Endothelial cell of umbilical vein (primary cell): ENCODE measurements at regions of chr19 and their contacts with region 1.

Region 1: GRCh38 chr19:53103198-53103944 is at the start of gene ZNF160:
- DNase-seq: peak; percentile 98
- H3K4me3 ChIP-seq: peak within 1 kb of the TSS; percentile 79 to 93 (median 90)
- H3K27ac ChIP-seq: peak within 1 kb of the TSS; percentile 94
- H3K4me1 ChIP-seq: peaks cover 11% of the 10 kb centered on the region
- H3K27me3 ChIP-seq: no peaks in the 10 kb centered on the region
- CTCF ChIP-seq: no peak
- POLR2A ChIP-seq: peak; percentile 72
- total RNA-seq, gene ZNF160: 16.4 and 19.7 TPM in 2 replicates

Region 2: DNA sequence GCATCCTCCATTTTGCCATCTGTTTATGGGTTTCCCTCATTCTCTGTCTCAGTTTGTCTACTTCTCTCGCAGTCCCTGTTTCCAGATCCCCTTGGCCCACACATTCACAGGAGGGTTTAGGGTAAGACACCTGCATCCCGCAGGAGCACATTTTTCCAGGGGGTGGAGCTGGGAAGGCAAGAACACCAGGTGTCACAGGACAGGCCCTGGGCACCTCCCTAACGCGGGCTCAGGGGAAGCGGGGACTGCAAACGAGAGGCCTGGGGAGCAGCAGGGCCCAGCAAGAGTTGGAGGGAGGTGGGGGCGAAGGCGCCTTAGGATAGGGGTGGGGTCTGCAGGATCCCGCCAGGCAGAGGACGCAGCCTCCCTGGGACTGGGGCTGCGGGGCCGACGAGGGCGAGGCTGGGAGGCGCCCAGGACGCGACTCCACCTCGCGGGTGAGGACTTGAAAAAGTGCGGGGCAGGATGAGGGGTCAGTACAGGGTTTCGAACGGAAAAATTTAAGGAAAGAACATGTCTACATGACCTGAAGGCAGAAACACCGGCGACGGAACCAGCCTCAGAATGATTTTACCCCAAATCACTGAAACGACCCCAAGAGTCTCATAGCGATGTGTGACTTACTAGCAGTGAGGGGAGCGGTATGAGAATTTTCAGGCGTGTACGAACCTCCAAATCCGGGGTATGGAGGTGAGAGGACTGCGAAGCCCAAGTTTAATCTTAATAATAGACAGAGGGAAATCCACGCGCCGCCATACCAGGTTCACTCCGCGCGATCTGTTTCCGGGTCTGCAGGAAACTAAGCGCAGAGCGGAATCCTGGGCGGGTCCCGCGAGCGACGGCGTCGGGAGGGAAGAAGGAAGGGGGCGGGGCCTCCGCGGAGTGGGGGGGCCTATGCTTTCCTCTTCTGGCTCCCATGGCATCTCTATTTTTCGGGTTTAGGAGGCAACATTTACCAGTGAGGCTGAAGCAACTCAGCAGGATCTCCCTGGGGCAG is 66.0 kb before region 1 on chr19:
- CTCF ChIA-PET with region 1: no interaction called
- POLR2A ChIA-PET with region 1: no interaction called
- dilution Hi-C with region 1: no loop called
- intact Hi-C with region 1: no loop called
- DNase-seq: peak; percentile 42
- H3K4me3 ChIP-seq: peak overlapping the region; percentile 43 to 86 (median 72)
- H3K27ac ChIP-seq: peak overlapping the region; percentile 15
- H3K4me1 ChIP-seq: no peaks in the 10 kb centered on the region
- H3K27me3 ChIP-seq: no peaks in the 10 kb centered on the region
- CTCF ChIP-seq: no peak
- POLR2A ChIP-seq: peak; percentile 50

Region 3: GRCh38 chr19:53076977-53077376 is 26.4 kb before region 1 on chr19:
- CTCF ChIA-PET with region 1: interaction called, 12 read pairs
- POLR2A ChIA-PET with region 1: interaction called, 3 read pairs
- dilution Hi-C with region 1: no loop called
- intact Hi-C with region 1: no loop called
- DNase-seq: peak; percentile 72
- H3K4me3 ChIP-seq: no peak overlapping the region
- H3K27ac ChIP-seq: no peak overlapping the region
- H3K4me1 ChIP-seq: no peaks in the 10 kb centered on the region
- H3K27me3 ChIP-seq: no peaks in the 10 kb centered on the region
- CTCF ChIP-seq: peak; percentile 78 to 79
- POLR2A ChIP-seq: no peak

Region 4: DNA sequence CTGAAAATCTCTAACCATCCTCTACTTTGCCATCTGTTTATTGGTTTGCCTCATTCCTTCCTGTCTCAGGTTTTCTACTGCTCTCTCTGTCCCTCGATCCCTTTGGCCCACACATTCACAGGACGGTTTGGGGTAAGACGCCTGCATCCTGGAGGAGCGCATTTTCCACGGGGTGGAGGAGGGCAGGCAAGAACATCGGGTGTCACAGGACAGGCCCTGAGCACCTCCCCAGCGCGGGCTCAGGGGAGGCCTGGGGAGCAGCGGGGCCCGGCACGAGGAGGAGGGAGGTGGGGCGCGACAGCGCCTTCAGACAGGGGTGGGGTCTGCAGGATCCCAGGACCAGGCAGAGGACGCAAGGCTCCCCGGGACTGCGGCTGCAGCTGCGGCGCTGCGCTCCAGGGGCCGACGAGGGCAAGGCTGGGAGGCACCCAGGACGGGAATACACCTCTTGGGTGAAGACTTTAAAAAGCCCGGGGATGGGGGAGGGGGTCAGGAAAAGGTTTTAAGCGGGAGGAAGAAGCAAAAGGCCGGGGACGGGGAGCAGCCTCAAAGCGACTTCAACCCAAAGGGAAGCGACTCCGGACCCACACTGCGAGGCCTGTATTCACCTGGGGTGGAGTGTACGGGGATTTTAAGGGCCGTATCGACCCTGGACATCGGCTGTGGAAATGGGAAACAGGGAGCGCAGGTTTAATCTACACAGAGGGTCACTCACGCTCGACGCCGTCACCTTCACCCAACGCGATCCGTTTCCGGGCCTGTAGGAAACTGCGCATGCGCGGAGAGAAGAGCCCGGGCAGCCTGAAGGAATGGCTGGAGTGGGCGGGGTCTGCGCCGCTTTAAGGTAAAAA is 29.0 kb after region 1 on chr19 and contains the start of gene ZNF415:
- CTCF ChIA-PET with region 1: no interaction called
- POLR2A ChIA-PET with region 1: no interaction called
- dilution Hi-C with region 1: no loop called
- intact Hi-C with region 1: loop called (anchors 2 kb)
- DNase-seq: peak; percentile 35
- H3K4me3 ChIP-seq: peak within 1 kb of the TSS in 1 of 3 experiments; percentile 35
- H3K27ac ChIP-seq: no peak within 1 kb of the TSS
- H3K4me1 ChIP-seq: no peaks in the 10 kb centered on the region
- H3K27me3 ChIP-seq: no peaks in the 10 kb centered on the region
- CTCF ChIP-seq: no peak
- POLR2A ChIP-seq: no peak
- total RNA-seq, gene ZNF415: 0.69 TPM in 1 of 2 replicates, not detected in the other

Region 5: GRCh38 chr19:53147645-53148044 is 44.3 kb after region 1 on chr19:
- CTCF ChIA-PET with region 1: no interaction called
- POLR2A ChIA-PET with region 1: no interaction called
- dilution Hi-C with region 1: no loop called
- intact Hi-C with region 1: no loop called
- DNase-seq: no peak
- H3K4me3 ChIP-seq: no peak overlapping the region
- H3K27ac ChIP-seq: no peak overlapping the region
- H3K4me1 ChIP-seq: no peaks in the 10 kb centered on the region
- H3K27me3 ChIP-seq: no peaks in the 10 kb centered on the region
- CTCF ChIP-seq: no peak
- POLR2A ChIP-seq: no peak

Region 6: GRCh38 chr19:53254411-53255341 is 151.3 kb after region 1 on chr19 and contains the start of gene ZNF677:
- CTCF ChIA-PET with region 1: no interaction called
- POLR2A ChIA-PET with region 1: no interaction called
- dilution Hi-C with region 1: no loop called
- intact Hi-C with region 1: loop called (anchors 1 kb)
- DNase-seq: peak; percentile 82
- H3K4me3 ChIP-seq: peak within 1 kb of the TSS; percentile 79 to 98 (median 90)
- H3K27ac ChIP-seq: peak within 1 kb of the TSS; percentile 42
- H3K4me1 ChIP-seq: peaks cover 7% of the 10 kb centered on the region
- H3K27me3 ChIP-seq: no peaks in the 10 kb centered on the region
- CTCF ChIP-seq: no peak
- POLR2A ChIP-seq: peak; percentile 73
- total RNA-seq, gene ZNF677: 15.8 and 21.0 TPM in 2 replicates